Activated CD4-positive, alpha-beta T cell treated with anti-CD3 and anti-CD28 coated beads, Interleukin-2, amount 10 ng/mL, durations not matched to agents 24 days and 14 days (primary cell): ENCODE measurements at regions of chr5 and their contacts with region 1.

Region 1: DNA sequence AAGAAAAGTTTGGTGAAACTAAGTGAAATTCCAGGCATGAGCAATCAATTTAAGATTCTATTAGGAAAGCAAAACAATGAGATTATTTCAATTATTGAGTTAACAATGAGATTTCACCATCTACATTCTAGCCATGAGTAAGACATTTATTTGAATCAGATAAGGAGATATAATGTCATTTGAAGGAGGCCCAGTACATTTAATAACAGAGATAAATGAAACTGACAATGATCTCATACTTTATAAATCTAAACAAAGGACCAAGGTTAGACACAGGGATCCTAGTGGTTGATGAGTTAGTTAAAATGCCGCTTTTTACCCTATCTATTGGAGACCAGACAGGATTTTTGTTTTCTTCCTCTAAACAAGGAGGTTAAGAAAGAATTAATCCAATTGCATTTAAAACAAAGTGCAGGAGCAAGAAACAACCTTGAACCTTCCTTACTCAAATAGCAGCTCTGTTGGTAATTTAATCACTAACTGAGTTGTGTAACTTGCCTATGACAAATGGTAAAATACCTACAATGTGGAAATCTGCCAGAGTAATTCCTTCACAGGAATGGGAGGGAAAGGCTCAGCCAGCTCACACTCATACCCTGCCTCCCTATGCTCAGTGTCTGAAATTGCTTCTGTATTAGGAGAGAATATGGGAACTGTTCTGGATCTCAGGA is 103.5 kb upstream of the NR3C1 start:
- DNase-seq: no peak
- H3K4me3 Mint-ChIP-seq: no peak overlapping the region
- H3K27ac Mint-ChIP-seq: no peak overlapping the region
- H3K4me1 Mint-ChIP-seq: no peaks in the 10 kb centered on the region
- H3K27me3 Mint-ChIP-seq: no peaks in the 10 kb centered on the region

Region 2: GRCh38 chr5:143471041-143471521 is 35.9 kb before region 1 on chr5:
- intact Hi-C with region 1: no loop called
- DNase-seq: no peak
- H3K4me3 Mint-ChIP-seq: no peak overlapping the region
- H3K27ac Mint-ChIP-seq: no peak overlapping the region
- H3K4me1 Mint-ChIP-seq: no peaks in the 10 kb centered on the region
- H3K27me3 Mint-ChIP-seq: no peaks in the 10 kb centered on the region

Region 3: GRCh38 chr5:143557061-143557818 is 50.2 kb after region 1 on chr5:
- intact Hi-C with region 1: loop called (anchors 10 kb)
- DNase-seq: no peak
- H3K4me3 Mint-ChIP-seq: no peak overlapping the region
- H3K27ac Mint-ChIP-seq: peak overlapping the region; percentile 49
- H3K4me1 Mint-ChIP-seq: peaks cover 16% of the 10 kb centered on the region
- H3K27me3 Mint-ChIP-seq: no peaks in the 10 kb centered on the region